ENCODE measurements at regions of chr14 and their contacts with region 1.

Region 1: GRCh38 chr14:24734878-24735500 is 101.0 kb upstream of the GZMB start:
- DNase-seq: no peak
- H3K4me3 ChIP-seq: no peak overlapping the region
- H3K27ac ChIP-seq: no peak overlapping the region
- H3K4me1 ChIP-seq: no peaks in the 10 kb centered on the region
- H3K27me3 ChIP-seq: peaks cover 0 to 9% (median 0%) of the 10 kb centered on the region in 7 donors
- CTCF ChIP-seq: peak in 9 of 11 experiments; percentile 32 to 71 (median 60)
- POLR2A ChIP-seq: no peak

Region 2: GRCh38 chr14:25150934-25151790 is 416.2 kb after region 1 on chr14:
- intact Hi-C with region 1: loop called (anchors 5 kb)
- DNase-seq: no peak
- H3K4me3 ChIP-seq: no peak overlapping the region
- H3K27ac ChIP-seq: no peak overlapping the region
- H3K4me1 ChIP-seq: no peaks in the 10 kb centered on the region
- H3K27me3 ChIP-seq: peaks cover 0 to 9% (median 0%) of the 10 kb centered on the region in 7 donors
- CTCF ChIP-seq: peak; percentile 30 to 80 (median 68)
- POLR2A ChIP-seq: no peak